Calu3 (cell line): ENCODE measurements at regions of chr4 and their contacts with region 1.

Region 1: GRCh38 chr4:82373816-82374625 is at the start of gene HNRNPD:
- DNase-seq: peak; percentile 95
- H3K4me3 Mint-ChIP-seq: peak within 1 kb of the TSS; percentile 77
- H3K27ac Mint-ChIP-seq: peak within 1 kb of the TSS; percentile 91
- H3K4me1 Mint-ChIP-seq: peaks cover 19% of the 10 kb centered on the region
- H3K27me3 Mint-ChIP-seq: no peaks in the 10 kb centered on the region
- CTCF ChIP-seq: no peak
- total RNA-seq, gene HNRNPD: 241 and 272 TPM in 2 replicates

Region 2: DNA sequence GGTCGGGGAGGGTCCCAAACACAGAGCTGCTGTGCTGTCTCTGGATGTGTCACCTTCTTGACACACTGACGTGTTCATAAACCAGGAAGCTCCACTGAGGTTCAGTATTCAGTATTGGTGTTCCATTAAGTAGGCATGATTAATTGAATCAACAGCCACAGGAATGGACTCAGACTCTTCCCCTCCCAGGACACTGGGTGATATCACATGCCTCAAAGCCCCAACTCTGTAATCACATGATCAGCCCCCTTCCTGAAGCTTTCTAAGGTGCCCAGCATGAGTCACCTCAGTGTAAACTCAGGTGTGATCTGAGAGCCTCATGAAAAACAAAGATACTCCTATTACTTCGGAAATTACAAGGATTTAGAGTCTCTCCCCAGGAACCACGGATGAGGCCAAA is 20.9 kb after region 1 on chr4:
- CTCF ChIA-PET with region 1: interaction called, 6 read pairs
- intact Hi-C with region 1: loop called (anchors 2 kb)
- DNase-seq: peak; percentile 71
- H3K4me3 Mint-ChIP-seq: peak overlapping the region; percentile 42
- H3K27ac Mint-ChIP-seq: peak overlapping the region; percentile 96
- H3K4me1 Mint-ChIP-seq: peaks cover 17% of the 10 kb centered on the region
- H3K27me3 Mint-ChIP-seq: no peaks in the 10 kb centered on the region
- CTCF ChIP-seq: no peak

Region 3: DNA sequence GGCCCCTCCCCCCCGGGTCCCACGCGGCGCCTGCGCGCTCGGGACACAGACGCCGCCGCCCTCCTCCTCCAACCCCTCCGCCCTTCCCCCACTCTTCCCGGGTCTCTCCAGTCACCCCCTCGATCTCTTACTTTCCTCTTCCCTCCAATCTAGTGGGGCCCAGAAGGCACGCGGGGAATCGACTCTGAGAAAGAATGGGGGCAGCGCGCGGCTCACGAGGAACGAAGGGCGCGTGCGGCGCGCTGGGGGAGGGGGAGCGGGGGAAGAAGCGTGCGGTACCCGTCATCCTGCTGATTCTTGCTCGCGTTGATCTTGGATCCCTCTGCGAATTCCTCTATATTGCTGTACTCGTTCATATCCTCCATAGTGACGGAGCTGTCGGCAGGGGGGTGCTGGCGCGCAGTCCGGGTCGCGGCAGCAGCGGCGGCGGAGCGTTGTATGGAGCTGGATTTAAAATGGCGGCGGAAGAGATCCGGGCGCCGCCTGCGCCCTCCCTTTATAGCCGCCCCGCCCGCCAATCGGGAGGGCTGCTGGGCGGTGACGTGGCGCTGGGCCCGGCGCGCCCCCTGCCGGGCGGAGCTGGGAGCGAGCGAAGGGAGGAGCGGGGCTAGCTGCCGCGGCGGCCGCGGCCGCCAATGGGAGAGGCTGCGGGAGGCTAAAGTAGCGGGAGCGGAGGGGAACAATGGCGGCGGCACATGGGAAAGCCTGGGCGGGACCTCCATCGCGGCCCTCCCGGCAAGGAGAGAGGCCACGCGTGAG is 55.1 kb after region 1 on chr4:
- CTCF ChIA-PET with region 1: no interaction called
- intact Hi-C with region 1: loop called (anchors 2 kb)
- DNase-seq: peak; percentile 92
- H3K4me3 Mint-ChIP-seq: peak overlapping the region; percentile 99
- H3K27ac Mint-ChIP-seq: peak overlapping the region; percentile 99
- H3K4me1 Mint-ChIP-seq: peaks cover 18% of the 10 kb centered on the region
- H3K27me3 Mint-ChIP-seq: peaks cover 9% of the 10 kb centered on the region
- CTCF ChIP-seq: peak; percentile 80

Region 4: GRCh38 chr4:82890901-82891706 is 517.1 kb after region 1 on chr4 and contains the start of gene SEC31A:
- CTCF ChIA-PET with region 1: no interaction called
- intact Hi-C with region 1: loop called (anchors 10 kb)
- DNase-seq: peak; percentile 94
- H3K4me3 Mint-ChIP-seq: peak within 1 kb of the TSS; percentile 86
- H3K27ac Mint-ChIP-seq: peak within 1 kb of the TSS; percentile 91
- H3K4me1 Mint-ChIP-seq: peaks cover 2% of the 10 kb centered on the region
- H3K27me3 Mint-ChIP-seq: no peaks in the 10 kb centered on the region
- CTCF ChIP-seq: no peak
- total RNA-seq, gene SEC31A: 106 and 108 TPM in 2 replicates